HepG2 (cell line): ENCODE measurements at regions of chr2 and their contacts with region 1.

Region 1: GRCh38 chr2:69781321-69782248 is 39.7 kb downstream of the ANXA4 start:
- DNase-seq: peak; percentile 97
- ATAC-seq: peak; percentile 91
- H3K4me3 ChIP-seq: peak overlapping the region in 2 of 3 experiments; percentile 14 to 26; a peak in 2 of 6 replicates
- H3K27ac ChIP-seq: peak overlapping the region; percentile 66
- H3K4me1 ChIP-seq: peaks cover 66% of the 10 kb centered on the region
- H3K27me3 ChIP-seq: no peaks in the 10 kb centered on the region
- CTCF ChIP-seq: no peak
- EP300 ChIP-seq: peak; percentile 95 to 99; a peak in 3 of 4 replicates
- POLR2A ChIP-seq: peak in 1 of 2 experiments; percentile 37; a peak in 2 of 4 replicates
- RAD21 ChIP-seq: no peak

Region 2: DNA sequence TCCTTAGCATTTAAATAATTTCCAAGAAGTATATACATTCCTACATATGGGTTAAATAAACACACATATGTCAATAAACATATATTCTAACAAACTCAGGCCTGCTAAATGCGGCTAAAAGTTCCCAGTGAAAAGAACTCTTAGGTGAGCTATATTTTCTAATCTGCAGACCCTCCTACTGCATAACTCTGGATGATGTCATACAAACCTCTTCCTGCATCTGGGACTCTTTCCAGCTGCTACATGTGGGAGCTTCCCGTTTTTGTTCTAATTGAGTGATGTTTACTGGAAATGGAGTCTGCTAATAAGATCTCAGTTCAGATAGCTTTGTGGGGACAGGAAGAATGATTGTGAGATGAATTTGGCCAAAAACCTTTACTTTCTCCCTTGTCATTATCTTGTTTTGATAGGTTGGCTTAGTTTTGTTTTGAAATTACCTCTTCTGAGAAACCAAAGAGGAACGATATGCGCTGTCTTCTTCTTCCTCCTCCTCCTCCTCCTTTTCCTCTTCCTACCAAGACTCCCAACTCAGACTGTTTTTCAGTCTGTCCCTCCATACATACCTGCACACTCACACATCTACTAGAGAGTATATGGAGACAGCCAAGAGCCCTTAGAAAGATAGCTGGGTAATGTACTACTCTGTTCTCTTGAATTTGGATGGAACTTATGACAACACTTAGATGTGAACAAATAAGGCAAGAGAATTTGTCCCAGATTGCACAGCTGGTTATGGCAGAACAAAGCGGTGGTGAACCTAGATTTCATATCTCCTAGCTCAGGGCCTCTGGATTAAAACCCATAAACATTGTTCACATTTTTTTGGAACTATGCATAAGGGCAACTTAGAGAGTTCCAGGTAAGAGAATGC is 98.2 kb before region 1 on chr2:
- CTCF ChIA-PET with region 1: no interaction called
- POLR2A ChIA-PET with region 1: no interaction called
- in situ Hi-C with region 1: no loop called
- intact Hi-C with region 1: no loop called
- DNase-seq: peak; percentile 38
- ATAC-seq: no peak
- H3K4me3 ChIP-seq: no peak overlapping the region
- H3K27ac ChIP-seq: no peak overlapping the region
- H3K4me1 ChIP-seq: peaks cover 42% of the 10 kb centered on the region
- H3K27me3 ChIP-seq: peaks cover 0 to 7% of the 10 kb centered on the region in 2 experiments; a peak in 3 of 5 replicates
- CTCF ChIP-seq: no peak
- EP300 ChIP-seq: no peak
- POLR2A ChIP-seq: no peak
- RAD21 ChIP-seq: no peak

Region 3: DNA sequence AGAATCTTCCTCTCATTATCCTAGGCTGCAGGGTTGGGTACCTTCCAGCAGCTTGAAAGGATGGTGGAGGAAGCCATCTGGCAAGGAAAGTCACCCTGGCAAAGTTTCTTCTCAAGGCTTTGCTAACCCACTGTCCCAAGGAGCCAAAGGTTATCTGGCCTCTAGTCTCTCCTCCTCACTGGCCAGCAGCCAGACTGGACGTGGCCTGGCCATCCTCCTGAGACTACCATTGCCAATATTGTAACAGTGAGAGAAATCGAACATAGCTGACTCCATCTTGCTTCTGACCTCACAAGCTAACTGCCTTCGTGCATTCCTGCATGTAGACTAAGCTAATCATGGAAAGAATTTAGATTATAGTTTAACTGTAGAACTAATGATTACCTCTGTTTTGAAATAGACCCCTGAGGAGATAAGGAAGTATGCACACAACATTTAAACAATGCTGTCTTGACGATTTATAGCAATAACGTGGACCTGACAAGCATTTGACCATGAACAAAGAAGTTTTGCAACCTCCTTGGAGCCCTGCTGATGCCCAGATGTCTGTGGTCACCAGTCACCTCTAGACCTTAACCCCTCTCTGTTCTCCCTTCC is 47.5 kb before region 1 on chr2:
- CTCF ChIA-PET with region 1: no interaction called
- POLR2A ChIA-PET with region 1: interaction called, 10 read pairs
- in situ Hi-C with region 1: no loop called
- intact Hi-C with region 1: no loop called
- DNase-seq: peak; percentile 86
- ATAC-seq: peak; percentile 81
- H3K4me3 ChIP-seq: no peak overlapping the region
- H3K27ac ChIP-seq: peak overlapping the region; percentile 55
- H3K4me1 ChIP-seq: peaks cover 46% of the 10 kb centered on the region
- H3K27me3 ChIP-seq: no peaks in the 10 kb centered on the region
- CTCF ChIP-seq: no peak
- EP300 ChIP-seq: peak; percentile 74 to 91; a peak in 3 of 4 replicates
- POLR2A ChIP-seq: peak in 1 of 2 experiments; percentile 41; a peak in 1 of 4 replicates
- RAD21 ChIP-seq: peak; percentile 50

Region 4: GRCh38 chr2:69764286-69765095 is 17.1 kb before region 1 on chr2:
- CTCF ChIA-PET with region 1: no interaction called
- POLR2A ChIA-PET with region 1: interaction called, 4 read pairs
- in situ Hi-C with region 1: no loop called
- intact Hi-C with region 1: loop called (anchors 2 kb)
- DNase-seq: peak; percentile 82
- ATAC-seq: peak; percentile 92
- H3K4me3 ChIP-seq: no peak overlapping the region
- H3K27ac ChIP-seq: peak overlapping the region; percentile 71
- H3K4me1 ChIP-seq: peaks cover 77% of the 10 kb centered on the region
- H3K27me3 ChIP-seq: no peaks in the 10 kb centered on the region
- CTCF ChIP-seq: no peak
- EP300 ChIP-seq: peak in 1 of 2 experiments; percentile 48; a peak in 1 of 4 replicates
- POLR2A ChIP-seq: no peak
- RAD21 ChIP-seq: no peak